IMR-90 (cell line): ENCODE measurements at regions of chr10 and their contacts with region 1.

Region 1: DNA sequence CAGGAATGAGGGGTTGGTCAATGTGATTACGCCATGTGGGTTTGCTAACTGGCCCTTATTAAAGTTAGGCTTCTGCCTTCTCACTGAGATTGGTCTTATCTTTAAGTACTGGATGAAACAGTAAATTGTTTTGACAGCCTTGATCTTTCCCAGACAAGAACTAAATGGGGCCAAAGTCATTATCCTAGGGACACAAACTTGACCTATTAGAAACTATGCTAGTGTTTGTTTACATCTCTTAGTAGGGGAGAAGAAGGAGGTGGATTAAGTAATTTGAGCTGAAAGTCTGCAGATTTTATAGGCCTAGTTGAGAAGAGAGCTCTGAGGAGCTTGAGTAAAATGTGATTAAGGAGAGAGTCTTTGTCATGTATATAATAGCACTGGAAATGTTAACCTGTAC is 386.9 kb downstream of the HTR7 start:
- DNase-seq: no peak
- ATAC-seq: peak; percentile 24; the same call in 1 of the 2 replicates
- H3K4me3 ChIP-seq: no peak overlapping the region
- H3K27ac ChIP-seq: no peak overlapping the region
- H3K4me1 ChIP-seq: no peaks in the 10 kb centered on the region
- H3K27me3 ChIP-seq: no peaks in the 10 kb centered on the region
- CTCF ChIP-seq: no peak
- POLR2A ChIP-seq: no peak
- RAD21 ChIP-seq: no peak

Region 2: GRCh38 chr10:90674928-90675327 is 204.0 kb after region 1 on chr10:
- CTCF ChIA-PET with region 1: no interaction called
- POLR2A ChIA-PET with region 1: no interaction called
- dilution Hi-C with region 1: no loop called
- in situ Hi-C with region 1: no loop called
- intact Hi-C with region 1: loop called (anchors 1 kb)
- DNase-seq: peak; percentile 86
- ATAC-seq: peak; percentile 98
- H3K4me3 ChIP-seq: no peak overlapping the region
- H3K27ac ChIP-seq: no peak overlapping the region
- H3K4me1 ChIP-seq: no peaks in the 10 kb centered on the region
- H3K27me3 ChIP-seq: no peaks in the 10 kb centered on the region; the same call in 1 of the 2 replicates
- CTCF ChIP-seq: no peak
- POLR2A ChIP-seq: no peak
- RAD21 ChIP-seq: no peak

Region 3: GRCh38 chr10:90701428-90701827 is 230.5 kb after region 1 on chr10:
- CTCF ChIA-PET with region 1: no interaction called
- POLR2A ChIA-PET with region 1: no interaction called
- dilution Hi-C with region 1: no loop called
- in situ Hi-C with region 1: no loop called
- intact Hi-C with region 1: no loop called
- DNase-seq: no peak
- ATAC-seq: no peak
- H3K4me3 ChIP-seq: no peak overlapping the region
- H3K27ac ChIP-seq: no peak overlapping the region
- H3K4me1 ChIP-seq: no peaks in the 10 kb centered on the region
- H3K27me3 ChIP-seq: no peaks in the 10 kb centered on the region
- CTCF ChIP-seq: no peak
- POLR2A ChIP-seq: no peak
- RAD21 ChIP-seq: no peak